Naive thymus-derived CD4-positive, alpha-beta T cell (primary cell): ENCODE measurements at regions of chr17 and their contacts with region 1.

Region 1: DNA sequence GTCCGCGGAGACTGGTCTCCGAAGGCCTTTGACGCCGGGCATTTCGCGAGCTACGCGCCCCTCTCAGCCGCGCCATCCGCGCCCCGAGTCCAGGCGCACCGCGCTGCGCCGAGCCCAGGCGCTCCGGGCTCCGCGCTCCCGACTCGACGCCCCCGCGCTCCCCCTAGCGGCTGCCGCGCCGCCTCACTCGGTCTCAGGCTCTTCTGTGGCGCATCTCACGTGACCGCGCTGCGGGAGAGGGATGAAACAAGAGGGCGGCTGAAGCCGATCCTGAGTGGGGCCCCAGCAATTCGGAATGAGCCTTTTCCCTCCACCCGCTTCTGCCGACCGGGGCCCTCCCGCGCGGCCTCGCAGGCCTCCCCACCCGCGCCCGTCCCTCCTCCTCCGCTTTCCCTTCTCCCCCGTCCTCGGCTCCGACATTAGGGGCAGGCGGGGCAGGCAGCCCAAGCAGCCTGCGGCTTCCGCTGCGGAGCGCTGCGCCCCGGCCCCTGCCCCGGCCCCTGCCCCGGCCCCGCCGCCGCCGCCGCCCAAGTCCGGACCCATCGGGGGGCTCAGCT is 42.5 kb upstream of the AMZ2 start:
- DNase-seq: peak; percentile 81 to 96 (median 91)
- ATAC-seq: peak; percentile 94
- H3K4me3 ChIP-seq: peak overlapping the region; percentile 50
- H3K4me3 Mint-ChIP-seq: peak overlapping the region; percentile 82 to 96 (median 88)
- H3K27ac ChIP-seq: peak overlapping the region; percentile 81
- H3K27ac Mint-ChIP-seq: peak overlapping the region in 7 of 9 donors; percentile 62 to 94 (median 88)
- H3K4me1 ChIP-seq: peaks cover 3 to 11% of the 10 kb centered on the region in 2 donors
- H3K4me1 Mint-ChIP-seq: peaks cover 7 to 38% (median 28%) of the 10 kb centered on the region in 7 donors
- H3K27me3 ChIP-seq: no peaks in the 10 kb centered on the region
- H3K27me3 Mint-ChIP-seq: peaks cover 0 to 12% (median 0%) of the 10 kb centered on the region in 5 donors

Region 2: DNA sequence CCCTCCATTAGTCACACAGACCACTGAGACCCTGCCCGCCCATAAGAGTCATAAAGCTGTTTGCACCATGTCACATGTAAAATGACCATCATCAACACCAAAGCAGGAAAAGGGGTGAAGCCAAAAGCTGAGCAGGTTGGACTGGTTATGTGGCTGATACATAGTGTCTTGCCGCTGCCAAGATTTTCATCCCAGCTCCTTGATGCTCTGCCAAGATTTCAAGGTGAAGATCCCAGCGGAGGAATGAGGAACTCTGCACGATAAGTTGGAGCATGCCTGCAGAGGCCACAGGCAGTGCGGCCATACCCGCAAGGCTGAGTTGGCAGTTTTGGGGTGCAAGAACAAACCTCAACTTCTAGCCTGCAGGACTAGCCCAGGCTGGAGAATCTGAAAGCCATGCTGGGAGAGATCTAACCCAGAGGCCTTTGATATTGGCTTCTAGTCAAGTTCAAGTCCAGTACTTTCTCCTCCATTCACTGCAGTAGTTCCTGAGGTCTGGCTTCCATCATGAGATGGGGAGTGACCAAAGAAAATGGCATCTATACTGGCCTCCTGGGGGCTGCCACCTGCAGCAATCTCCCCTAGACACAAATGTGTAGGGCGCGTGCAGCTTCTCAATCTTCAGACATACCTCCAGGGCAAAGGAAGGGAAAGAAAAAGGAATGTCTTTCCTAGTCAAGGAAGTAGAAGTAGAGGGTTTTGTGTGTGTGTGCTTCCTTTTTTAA is 567.2 kb before region 1 on chr17:
- CTCF ChIA-PET with region 1: no interaction called
- POLR2A ChIA-PET with region 1: no interaction called
- intact Hi-C with region 1: no loop called
- DNase-seq: no peak
- ATAC-seq: no peak
- H3K4me3 ChIP-seq: no peak overlapping the region
- H3K4me3 Mint-ChIP-seq: no peak overlapping the region
- H3K27ac ChIP-seq: no peak overlapping the region
- H3K27ac Mint-ChIP-seq: peak overlapping the region in 5 of 9 donors; percentile 4 to 75 (median 55)
- H3K4me1 ChIP-seq: no peaks in the 10 kb centered on the region
- H3K4me1 Mint-ChIP-seq: peaks cover 0 to 12% (median 6%) of the 10 kb centered on the region in 7 donors
- H3K27me3 ChIP-seq: no peaks in the 10 kb centered on the region
- H3K27me3 Mint-ChIP-seq: no peaks in the 10 kb centered on the region

Region 3: GRCh38 chr17:67700037-67700724 is 505.1 kb before region 1 on chr17:
- CTCF ChIA-PET with region 1: no interaction called
- POLR2A ChIA-PET with region 1: no interaction called
- intact Hi-C with region 1: no loop called
- DNase-seq: no peak
- ATAC-seq: no peak
- H3K4me3 ChIP-seq: no peak overlapping the region
- H3K4me3 Mint-ChIP-seq: no peak overlapping the region
- H3K27ac ChIP-seq: no peak overlapping the region
- H3K27ac Mint-ChIP-seq: peak overlapping the region in 3 of 9 donors; percentile 8 to 62 (median 58)
- H3K4me1 ChIP-seq: no peaks in the 10 kb centered on the region
- H3K4me1 Mint-ChIP-seq: peaks cover 0 to 4% (median 0%) of the 10 kb centered on the region in 7 donors
- H3K27me3 ChIP-seq: no peaks in the 10 kb centered on the region
- H3K27me3 Mint-ChIP-seq: no peaks in the 10 kb centered on the region

Region 4: DNA sequence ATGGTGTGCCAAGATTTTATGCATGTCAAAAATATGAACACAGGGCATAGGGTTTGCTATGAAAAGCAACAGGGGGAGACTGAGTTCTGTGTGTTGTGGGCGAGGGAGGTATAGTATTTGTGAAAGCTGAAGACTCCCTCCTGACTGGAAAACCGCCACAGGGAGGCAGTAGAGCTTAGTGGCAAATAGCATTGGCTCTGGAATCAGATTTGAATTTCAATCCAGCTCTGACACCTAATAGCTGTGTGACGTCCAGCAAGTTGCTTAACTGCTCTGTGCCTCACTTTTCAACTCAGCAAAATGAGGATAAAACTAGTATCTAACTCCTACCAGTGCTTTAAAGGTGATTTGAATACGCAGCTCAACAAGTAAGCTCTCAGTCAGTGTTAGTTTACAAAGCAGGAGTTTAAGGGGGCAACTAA is 147.8 kb before region 1 on chr17:
- CTCF ChIA-PET with region 1: interaction called, 13 read pairs
- POLR2A ChIA-PET with region 1: interaction called, 3 read pairs
- intact Hi-C with region 1: loop called (anchors 1 to 2 kb)
- DNase-seq: peak in 7 of 9 donors; percentile 23 to 56 (median 44)
- ATAC-seq: peak; percentile 84
- H3K4me3 ChIP-seq: no peak overlapping the region
- H3K4me3 Mint-ChIP-seq: no peak overlapping the region
- H3K27ac ChIP-seq: no peak overlapping the region
- H3K27ac Mint-ChIP-seq: peak overlapping the region in 1 of 9 donors; percentile 49
- H3K4me1 ChIP-seq: no peaks in the 10 kb centered on the region
- H3K4me1 Mint-ChIP-seq: peaks cover 0 to 16% (median 10%) of the 10 kb centered on the region in 7 donors
- H3K27me3 ChIP-seq: no peaks in the 10 kb centered on the region
- H3K27me3 Mint-ChIP-seq: peaks cover 0 to 7% (median 0%) of the 10 kb centered on the region in 5 donors

Region 5: GRCh38 chr17:68172461-68172954 is 32.8 kb before region 1 on chr17:
- CTCF ChIA-PET with region 1: interaction called, 45 read pairs
- POLR2A ChIA-PET with region 1: interaction called, 15 read pairs
- intact Hi-C with region 1: loop called (anchors 1 kb)
- DNase-seq: peak; percentile 45 to 74 (median 67)
- ATAC-seq: peak; percentile 92
- H3K4me3 ChIP-seq: no peak overlapping the region
- H3K4me3 Mint-ChIP-seq: no peak overlapping the region
- H3K27ac ChIP-seq: no peak overlapping the region
- H3K27ac Mint-ChIP-seq: no peak overlapping the region
- H3K4me1 ChIP-seq: peaks cover 0 to 7% of the 10 kb centered on the region in 2 donors
- H3K4me1 Mint-ChIP-seq: peaks cover 14 to 38% (median 20%) of the 10 kb centered on the region in 7 donors
- H3K27me3 ChIP-seq: no peaks in the 10 kb centered on the region
- H3K27me3 Mint-ChIP-seq: peaks cover 0 to 1% (median 0%) of the 10 kb centered on the region in 5 donors

Region 6: GRCh38 chr17:68184816-68185436 is 20.4 kb before region 1 on chr17:
- CTCF ChIA-PET with region 1: interaction called, 39 read pairs
- POLR2A ChIA-PET with region 1: interaction called, 113 read pairs
- intact Hi-C with region 1: loop called (anchors 1 kb)
- DNase-seq: peak in 7 of 9 donors; percentile 57 to 75 (median 64)
- ATAC-seq: peak; percentile 87
- H3K4me3 ChIP-seq: peak overlapping the region; percentile 29
- H3K4me3 Mint-ChIP-seq: peak overlapping the region; percentile 69 to 89 (median 76)
- H3K27ac ChIP-seq: peak overlapping the region; percentile 39
- H3K27ac Mint-ChIP-seq: peak overlapping the region; percentile 60 to 93 (median 89)
- H3K4me1 ChIP-seq: peaks cover 39 to 48% of the 10 kb centered on the region in 2 donors
- H3K4me1 Mint-ChIP-seq: peaks cover 22 to 62% (median 55%) of the 10 kb centered on the region in 7 donors
- H3K27me3 ChIP-seq: no peaks in the 10 kb centered on the region
- H3K27me3 Mint-ChIP-seq: peaks cover 0 to 4% (median 0%) of the 10 kb centered on the region in 5 donors

Region 7: GRCh38 chr17:68247445-68248198 is 42.3 kb after region 1 on chr17 and contains the start of gene AMZ2:
- CTCF ChIA-PET with region 1: interaction called, 5 read pairs
- POLR2A ChIA-PET with region 1: interaction called, 61 read pairs
- intact Hi-C with region 1: loop called (anchors 1 kb)
- DNase-seq: peak; percentile 92 to 100 (median 97)
- ATAC-seq: peak; percentile 96
- H3K4me3 ChIP-seq: peak within 1 kb of the TSS; percentile 89
- H3K4me3 Mint-ChIP-seq: peak within 1 kb of the TSS; percentile 80 to 96 (median 92)
- H3K27ac ChIP-seq: peak within 1 kb of the TSS; percentile 99
- H3K27ac Mint-ChIP-seq: peak within 1 kb of the TSS; percentile 78 to 99 (median 97)
- H3K4me1 ChIP-seq: peaks cover 18 to 36% of the 10 kb centered on the region in 2 donors
- H3K4me1 Mint-ChIP-seq: peaks cover 11 to 52% (median 31%) of the 10 kb centered on the region in 7 donors
- H3K27me3 ChIP-seq: no peaks in the 10 kb centered on the region
- H3K27me3 Mint-ChIP-seq: no peaks in the 10 kb centered on the region
- total RNA-seq, gene AMZ2: 47.6 to 85.5 (median 73.8) TPM

Region 8: GRCh38 chr17:68356520-68356919 is 151.2 kb after region 1 on chr17:
- CTCF ChIA-PET with region 1: no interaction called
- POLR2A ChIA-PET with region 1: no interaction called
- intact Hi-C with region 1: loop called in 1 of 2 experiments (anchors 10 kb)
- DNase-seq: peak in 8 of 9 donors; percentile 67 to 86 (median 80)
- ATAC-seq: peak; percentile 98
- H3K4me3 ChIP-seq: peak overlapping the region; percentile 33
- H3K4me3 Mint-ChIP-seq: peak overlapping the region; percentile 73 to 86 (median 80)
- H3K27ac ChIP-seq: peak overlapping the region; percentile 24
- H3K27ac Mint-ChIP-seq: peak overlapping the region; percentile 24 to 91 (median 82)
- H3K4me1 ChIP-seq: peaks cover 54 to 56% of the 10 kb centered on the region in 2 donors
- H3K4me1 Mint-ChIP-seq: peaks cover 43 to 69% (median 62%) of the 10 kb centered on the region in 7 donors
- H3K27me3 ChIP-seq: no peaks in the 10 kb centered on the region
- H3K27me3 Mint-ChIP-seq: no peaks in the 10 kb centered on the region

Region 9: GRCh38 chr17:68512247-68512982 is 307.1 kb after region 1 on chr17 and contains the start of gene PRKAR1A:
- CTCF ChIA-PET with region 1: no interaction called
- POLR2A ChIA-PET with region 1: no interaction called
- intact Hi-C with region 1: loop called in 1 of 2 experiments (anchors 5 kb)
- DNase-seq: peak; percentile 84 to 96 (median 94)
- ATAC-seq: peak; percentile 92
- H3K4me3 ChIP-seq: peak within 1 kb of the TSS; percentile 97
- H3K4me3 Mint-ChIP-seq: peak within 1 kb of the TSS; percentile 89 to 100 (median 100)
- H3K27ac ChIP-seq: peak within 1 kb of the TSS; percentile 98
- H3K27ac Mint-ChIP-seq: peak within 1 kb of the TSS; percentile 91 to 100 (median 100)
- H3K4me1 ChIP-seq: peaks cover 13 to 22% of the 10 kb centered on the region in 2 donors
- H3K4me1 Mint-ChIP-seq: peaks cover 34 to 74% (median 51%) of the 10 kb centered on the region in 7 donors
- H3K27me3 ChIP-seq: no peaks in the 10 kb centered on the region
- H3K27me3 Mint-ChIP-seq: no peaks in the 10 kb centered on the region
- total RNA-seq, gene PRKAR1A: 115 to 224 (median 156) TPM

Region 10: DNA sequence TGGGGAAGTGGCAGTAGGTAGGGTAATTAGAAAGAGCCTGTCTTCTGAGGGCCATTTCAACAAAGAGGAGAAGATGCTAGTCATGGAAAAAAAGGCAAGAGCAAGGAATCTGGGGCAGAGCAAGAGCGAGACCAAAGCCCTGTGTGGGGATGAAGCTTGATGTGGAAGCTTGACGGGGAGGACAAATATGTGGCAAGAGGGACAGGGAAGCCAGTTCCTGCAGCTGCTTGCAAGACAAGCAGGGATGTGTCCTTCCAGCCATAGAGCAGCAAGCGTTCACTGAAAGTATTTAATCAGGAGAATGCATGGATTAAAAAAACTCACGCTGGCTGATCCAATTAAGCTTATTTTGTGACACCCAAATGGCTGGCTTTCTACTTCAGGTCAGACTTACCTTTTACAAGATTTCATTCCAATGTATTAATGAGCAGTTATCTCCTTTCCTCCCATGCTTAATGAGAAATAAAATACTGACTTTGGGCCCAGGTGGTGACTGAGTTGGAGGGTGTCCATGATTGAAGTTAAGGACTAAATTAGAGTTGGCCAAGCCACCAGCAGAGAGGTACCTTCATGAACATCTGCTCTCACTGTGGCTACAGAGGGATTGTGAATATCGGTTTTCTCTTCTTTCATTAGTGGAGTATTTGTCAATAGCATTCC is 673.0 kb after region 1 on chr17:
- CTCF ChIA-PET with region 1: no interaction called
- POLR2A ChIA-PET with region 1: no interaction called
- intact Hi-C with region 1: no loop called
- DNase-seq: no peak
- ATAC-seq: no peak
- H3K4me3 ChIP-seq: no peak overlapping the region
- H3K4me3 Mint-ChIP-seq: no peak overlapping the region
- H3K27ac ChIP-seq: no peak overlapping the region
- H3K27ac Mint-ChIP-seq: no peak overlapping the region
- H3K4me1 ChIP-seq: no peaks in the 10 kb centered on the region
- H3K4me1 Mint-ChIP-seq: no peaks in the 10 kb centered on the region
- H3K27me3 ChIP-seq: no peaks in the 10 kb centered on the region
- H3K27me3 Mint-ChIP-seq: peaks cover 0 to 38% (median 14%) of the 10 kb centered on the region in 5 donors

Region 11: DNA sequence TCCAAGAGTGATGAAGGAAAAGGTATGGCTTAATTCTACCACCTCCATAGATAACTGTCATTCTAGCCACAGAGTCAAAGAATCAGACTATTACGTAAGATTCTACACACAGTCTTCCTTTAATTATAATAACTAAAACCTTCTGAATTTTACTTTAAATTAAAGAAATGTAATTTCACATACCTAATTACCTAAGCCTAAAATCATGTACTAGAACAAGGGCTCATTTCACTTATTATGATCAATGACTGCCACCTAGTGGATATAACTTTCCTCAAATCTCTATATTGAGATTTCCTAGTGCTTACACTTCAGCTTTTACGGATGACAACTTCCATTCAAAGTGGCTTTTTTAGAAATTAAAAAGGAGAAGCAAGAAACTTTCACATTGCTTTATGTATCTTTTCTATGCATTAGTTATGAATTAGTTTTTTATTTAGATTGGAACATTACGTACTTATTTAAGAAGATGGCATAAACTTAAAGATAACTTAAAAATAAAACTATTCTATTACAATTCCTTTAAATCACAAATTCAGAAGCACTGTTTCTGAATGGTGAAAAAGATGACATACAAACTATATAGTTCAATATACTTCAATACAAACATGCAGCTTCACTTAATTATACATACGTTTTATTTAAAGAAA is 1041.5 kb after region 1 on chr17:
- CTCF ChIA-PET with region 1: no interaction called
- POLR2A ChIA-PET with region 1: no interaction called
- intact Hi-C with region 1: no loop called
- DNase-seq: peak in 6 of 9 donors; percentile 2 to 37 (median 26)
- ATAC-seq: no peak
- H3K4me3 ChIP-seq: no peak overlapping the region
- H3K4me3 Mint-ChIP-seq: no peak overlapping the region
- H3K27ac ChIP-seq: no peak overlapping the region
- H3K27ac Mint-ChIP-seq: no peak overlapping the region
- H3K4me1 ChIP-seq: no peaks in the 10 kb centered on the region
- H3K4me1 Mint-ChIP-seq: peaks cover 0 to 4% (median 0%) of the 10 kb centered on the region in 7 donors
- H3K27me3 ChIP-seq: no peaks in the 10 kb centered on the region
- H3K27me3 Mint-ChIP-seq: no peaks in the 10 kb centered on the region